ENCODE measurements at regions of chr12 and their contacts with region 1.

Region 1: DNA sequence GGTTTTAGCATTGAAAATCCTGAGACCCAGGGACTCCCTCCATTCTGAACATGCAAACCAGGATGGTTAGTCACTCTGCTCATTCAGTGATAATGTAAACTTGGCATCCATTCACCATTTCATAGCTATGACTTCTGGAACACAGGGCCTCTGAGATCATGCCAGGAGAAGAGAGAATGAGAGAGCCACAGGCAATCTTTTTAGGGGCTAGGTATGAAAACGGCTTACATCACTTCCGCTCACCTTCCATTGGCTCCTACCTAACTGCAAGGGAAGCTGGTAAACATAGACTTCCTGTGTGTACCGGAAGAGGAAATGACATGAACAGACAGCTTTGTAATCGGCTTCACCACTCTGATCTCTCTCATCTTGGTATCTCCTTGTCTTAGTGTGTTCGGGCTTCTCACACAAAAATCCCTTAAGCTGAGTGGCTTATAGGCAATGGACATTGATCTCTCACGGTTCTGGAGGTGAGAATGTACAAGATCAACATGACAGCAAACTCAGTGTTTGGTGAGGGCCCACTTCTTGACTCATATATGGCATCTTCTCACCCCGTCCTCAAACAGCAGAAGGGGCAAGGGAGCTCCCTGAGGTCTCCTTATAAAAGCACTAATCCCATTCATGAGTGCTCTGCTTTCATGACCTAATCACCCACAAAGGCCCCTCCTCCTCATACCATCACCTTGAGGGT is 465.9 kb upstream of the TBX3 start:
- DNase-seq: peak; percentile 99
- ATAC-seq: peak; percentile 97
- H3K4me3 ChIP-seq: peak overlapping the region; percentile 23; the same call in 1 of the 2 replicates
- H3K27ac ChIP-seq: peak overlapping the region; percentile 93
- H3K4me1 ChIP-seq: peaks cover 3% of the 10 kb centered on the region
- H3K27me3 ChIP-seq: no peaks in the 10 kb centered on the region
- CTCF ChIP-seq: no peak
- POLR2A ChIP-seq: peak; percentile 69; the same call in 1 of the 2 replicates
- RAD21 ChIP-seq: peak; percentile 34; the same call in 1 of the 2 replicates

Region 2: GRCh38 chr12:114933428-114934168 is 216.2 kb before region 1 on chr12:
- CTCF ChIA-PET with region 1: no interaction called
- POLR2A ChIA-PET with region 1: no interaction called
- dilution Hi-C with region 1: no loop called
- in situ Hi-C with region 1: no loop called
- intact Hi-C with region 1: loop called (anchors 5 kb)
- DNase-seq: peak; percentile 94
- ATAC-seq: peak; percentile 97
- H3K4me3 ChIP-seq: no peak overlapping the region
- H3K27ac ChIP-seq: peak overlapping the region; percentile 28; the same call in 1 of the 2 replicates
- H3K4me1 ChIP-seq: peaks cover 7% of the 10 kb centered on the region
- H3K27me3 ChIP-seq: no peaks in the 10 kb centered on the region
- CTCF ChIP-seq: no peak
- POLR2A ChIP-seq: no peak; the same call in 1 of the 2 replicates
- RAD21 ChIP-seq: 0 out of 2 replicates have a peak, but pooled peaks have one; percentile 11

Region 3: DNA sequence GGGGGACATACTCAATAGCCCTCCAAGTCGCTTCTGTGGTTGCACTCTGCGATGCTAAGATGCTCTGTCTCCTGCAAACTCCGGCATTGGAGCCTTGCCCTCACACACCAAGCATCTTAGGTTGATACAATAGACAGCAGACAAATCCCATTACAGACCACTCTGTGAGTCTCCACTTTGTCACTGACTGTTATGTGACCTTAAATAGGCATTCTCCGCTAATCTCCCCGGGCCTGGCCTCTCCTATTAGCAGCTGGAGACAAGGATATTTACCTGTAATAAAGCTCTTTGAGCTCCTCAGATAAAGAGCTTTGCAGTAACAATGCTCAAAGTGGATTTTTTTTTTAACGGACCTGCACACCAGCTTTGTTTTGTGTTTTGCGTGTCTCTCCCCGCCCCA is 13.9 kb after region 1 on chr12:
- CTCF ChIA-PET with region 1: no interaction called
- POLR2A ChIA-PET with region 1: no interaction called
- dilution Hi-C with region 1: no loop called
- in situ Hi-C with region 1: no loop called
- intact Hi-C with region 1: no loop called
- DNase-seq: no peak
- ATAC-seq: no peak
- H3K4me3 ChIP-seq: no peak overlapping the region
- H3K27ac ChIP-seq: no peak overlapping the region
- H3K4me1 ChIP-seq: no peaks in the 10 kb centered on the region; the same call in 1 of the 2 replicates
- H3K27me3 ChIP-seq: no peaks in the 10 kb centered on the region
- CTCF ChIP-seq: no peak
- POLR2A ChIP-seq: no peak
- RAD21 ChIP-seq: no peak